Activated T-helper 1 cell treated with anti-CD3 and anti-CD28 coated beads, Interleukin-12 subunit alpha, Interleukin-12 subunit beta, Interleukin-2, Interleukin-4 antibody, amounts not matched to agents 30 ng/mL and 10 ng/mL and 1 ng/mL, durations not matched to agents 14 hours and 24 hours and 36 hours (primary cell): ENCODE measurements at regions of chr11 and their contacts with region 1.

Region 1: DNA sequence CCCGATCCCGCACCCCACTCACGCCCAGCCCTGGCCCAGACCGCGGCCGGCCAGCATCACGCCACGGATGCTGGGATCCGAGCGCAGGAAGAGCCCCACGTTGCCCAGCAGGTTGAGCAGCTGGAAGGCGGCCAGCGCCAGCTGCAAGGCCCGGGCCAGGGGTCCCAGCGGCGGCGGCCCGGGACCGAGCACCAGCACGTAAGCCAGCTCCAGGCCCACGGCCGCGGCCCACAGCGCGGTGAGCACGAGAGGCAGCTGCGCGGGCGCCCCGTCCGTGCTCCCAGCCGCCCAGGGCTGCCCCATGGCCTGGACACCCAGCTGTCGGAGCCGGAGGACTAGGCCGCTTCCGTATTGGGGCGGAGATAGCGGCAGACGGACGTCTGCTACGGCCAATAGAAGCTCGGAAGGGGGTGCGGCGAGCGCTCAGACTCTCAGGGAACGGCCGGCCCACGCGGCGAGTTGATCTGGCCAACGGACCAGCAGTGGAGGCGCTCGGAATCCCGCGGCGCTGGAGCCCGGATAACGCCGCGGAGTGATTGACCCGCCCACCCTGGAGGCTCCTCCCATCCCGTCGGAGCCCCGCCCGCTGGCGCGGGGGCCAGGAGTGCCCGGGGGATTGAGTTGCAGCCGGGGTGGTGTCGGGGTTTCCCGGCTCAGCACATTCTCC is at the start of gene ZDHHC24:
- DNase-seq: peak; percentile 86
- H3K4me3 Mint-ChIP-seq: peak within 1 kb of the TSS; percentile 88
- H3K27ac Mint-ChIP-seq: peak within 1 kb of the TSS; percentile 47
- H3K4me1 Mint-ChIP-seq: peaks cover 28% of the 10 kb centered on the region
- H3K27me3 Mint-ChIP-seq: peaks cover 10% of the 10 kb centered on the region
- total RNA-seq, gene ZDHHC24: 14.6 and 15.6 TPM in 2 replicates

Region 2: GRCh38 chr11:66408488-66409214 is 137.2 kb before region 1 on chr11:
- intact Hi-C with region 1: loop called (anchors 1 kb)
- DNase-seq: peak; percentile 86
- H3K4me3 Mint-ChIP-seq: peak overlapping the region; percentile 84
- H3K27ac Mint-ChIP-seq: peak overlapping the region; percentile 72
- H3K4me1 Mint-ChIP-seq: peaks cover 9% of the 10 kb centered on the region
- H3K27me3 Mint-ChIP-seq: peaks cover 21% of the 10 kb centered on the region

Region 3: GRCh38 chr11:66480117-66480938 is 65.5 kb before region 1 on chr11 and contains the start of gene DPP3:
- intact Hi-C with region 1: loop called (anchors 1 kb)
- DNase-seq: peak; percentile 96
- H3K4me3 Mint-ChIP-seq: peak within 1 kb of the TSS; percentile 89
- H3K27ac Mint-ChIP-seq: peak within 1 kb of the TSS; percentile 82
- H3K4me1 Mint-ChIP-seq: peaks cover 44% of the 10 kb centered on the region
- H3K27me3 Mint-ChIP-seq: no peaks in the 10 kb centered on the region
- total RNA-seq, gene DPP3: 102 and 112 TPM in 2 replicates

Region 4: DNA sequence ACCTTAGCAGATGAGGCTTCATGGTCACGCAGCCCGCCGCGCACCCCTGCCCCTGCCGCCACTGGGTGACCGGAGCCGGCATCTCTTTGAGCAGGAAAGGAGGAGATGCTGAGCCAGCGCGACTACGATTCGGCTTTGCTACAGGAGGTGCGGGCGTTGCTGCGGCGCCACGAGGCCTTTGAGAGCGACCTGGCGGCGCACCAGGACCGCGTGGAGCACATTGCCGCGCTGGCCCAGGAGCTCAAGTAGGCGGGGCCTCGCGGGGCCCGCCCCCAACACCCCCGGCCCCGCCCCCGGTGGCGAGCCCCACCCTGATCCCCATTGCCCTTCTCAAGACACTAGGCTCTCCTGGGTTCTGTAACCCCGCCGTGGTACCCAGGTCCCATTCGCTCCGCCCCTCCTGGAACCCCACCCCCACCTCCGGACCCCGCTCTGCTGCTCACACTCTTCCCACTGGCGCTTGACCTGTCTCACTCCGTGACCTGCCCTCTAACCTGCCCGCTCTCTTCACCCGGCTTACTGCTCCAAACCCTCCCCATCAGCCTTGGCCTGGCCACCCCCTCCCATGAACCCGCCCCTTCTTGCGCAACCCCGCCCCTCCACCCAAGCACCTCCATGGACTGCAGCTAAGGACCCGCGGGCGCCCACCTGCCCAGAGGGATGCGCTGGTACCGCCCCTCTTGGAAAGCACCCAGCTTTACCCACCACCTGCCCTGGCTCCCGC is 13.5 kb after region 1 on chr11:
- intact Hi-C with region 1: loop called (anchors 1 kb)
- DNase-seq: no peak
- H3K4me3 Mint-ChIP-seq: no peak overlapping the region
- H3K27ac Mint-ChIP-seq: no peak overlapping the region
- H3K4me1 Mint-ChIP-seq: no peaks in the 10 kb centered on the region
- H3K27me3 Mint-ChIP-seq: peaks cover 11% of the 10 kb centered on the region

Region 5: GRCh38 chr11:66592457-66593302 is 46.8 kb after region 1 on chr11 and contains the starts of genes CCDC87 and CCS:
- intact Hi-C with region 1: loop called (anchors 1 kb)
- DNase-seq: peak; percentile 96
- H3K4me3 Mint-ChIP-seq: peak within 1 kb of the TSS; percentile 100
- H3K27ac Mint-ChIP-seq: peak within 1 kb of the TSS; percentile 97
- H3K4me1 Mint-ChIP-seq: peaks cover 30% of the 10 kb centered on the region
- H3K27me3 Mint-ChIP-seq: no peaks in the 10 kb centered on the region
- total RNA-seq, gene CCDC87: 0.29 and 0.37 TPM in 2 replicates
- total RNA-seq, gene CCS: 25.3 and 32.1 TPM in 2 replicates

Region 6: GRCh38 chr11:66638177-66639065 is 92.6 kb after region 1 on chr11 and contains the start of gene RBM4:
- intact Hi-C with region 1: loop called (anchors 1 kb)
- DNase-seq: peak; percentile 97
- H3K4me3 Mint-ChIP-seq: peak within 1 kb of the TSS; percentile 96
- H3K27ac Mint-ChIP-seq: peak within 1 kb of the TSS; percentile 96
- H3K4me1 Mint-ChIP-seq: peaks cover 68% of the 10 kb centered on the region
- H3K27me3 Mint-ChIP-seq: no peaks in the 10 kb centered on the region
- total RNA-seq, gene RBM4: 131 and 133 TPM in 2 replicates